Activated CD4-positive, alpha-beta T cell treated with anti-CD3 and anti-CD28 coated beads for 36 hours (primary cell): ENCODE measurements at regions of chr3 and their contacts with region 1.

Region 1: DNA sequence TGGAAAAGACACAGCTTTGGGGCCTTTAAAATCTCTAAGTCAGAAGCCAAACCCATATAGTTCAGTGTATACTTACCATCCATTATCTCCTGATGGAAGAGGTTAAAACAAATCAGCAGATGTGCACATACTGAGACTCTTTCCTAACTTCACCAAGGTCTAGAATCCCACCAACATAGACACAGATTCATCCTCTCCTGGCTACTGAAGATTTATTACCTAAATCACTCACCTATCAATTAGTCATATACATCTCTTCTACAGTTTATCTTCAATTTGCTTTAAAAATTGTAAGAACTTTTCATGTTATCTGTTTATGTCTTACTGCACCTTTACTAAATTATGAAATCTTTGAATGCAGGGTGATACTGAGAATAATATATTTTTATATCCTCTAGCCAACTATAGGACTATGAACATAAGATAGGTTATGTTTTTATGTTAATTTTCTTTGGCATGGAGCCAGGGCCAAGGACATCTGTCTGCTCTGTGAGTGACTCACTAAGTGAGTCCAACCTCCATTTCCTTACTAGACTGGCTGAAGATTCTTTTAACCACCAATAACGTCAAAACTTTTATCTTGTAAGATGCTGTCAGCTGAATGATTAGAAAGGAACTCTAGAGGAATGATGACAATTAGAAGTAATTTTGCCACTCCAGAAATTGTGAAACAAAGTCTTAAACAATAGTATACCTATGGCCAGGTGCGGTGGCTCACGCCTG is 397.6 kb downstream of the FOXP1 start:
- DNase-seq: peak; percentile 38
- ATAC-seq: peak; percentile 70
- H3K4me3 Mint-ChIP-seq: no peak overlapping the region
- H3K27ac Mint-ChIP-seq: peak overlapping the region; percentile 83
- H3K4me1 Mint-ChIP-seq: peaks cover 59% of the 10 kb centered on the region
- H3K27me3 Mint-ChIP-seq: no peaks in the 10 kb centered on the region

Region 2: GRCh38 chr3:70973558-70973957 is 212.3 kb before region 1 on chr3:
- CTCF ChIA-PET with region 1: no interaction called
- POLR2A ChIA-PET with region 1: no interaction called
- intact Hi-C with region 1: no loop called
- DNase-seq: no peak
- ATAC-seq: peak; percentile 69
- H3K4me3 Mint-ChIP-seq: no peak overlapping the region
- H3K27ac Mint-ChIP-seq: peak overlapping the region; percentile 76
- H3K4me1 Mint-ChIP-seq: peaks cover 27% of the 10 kb centered on the region
- H3K27me3 Mint-ChIP-seq: no peaks in the 10 kb centered on the region

Region 3: DNA sequence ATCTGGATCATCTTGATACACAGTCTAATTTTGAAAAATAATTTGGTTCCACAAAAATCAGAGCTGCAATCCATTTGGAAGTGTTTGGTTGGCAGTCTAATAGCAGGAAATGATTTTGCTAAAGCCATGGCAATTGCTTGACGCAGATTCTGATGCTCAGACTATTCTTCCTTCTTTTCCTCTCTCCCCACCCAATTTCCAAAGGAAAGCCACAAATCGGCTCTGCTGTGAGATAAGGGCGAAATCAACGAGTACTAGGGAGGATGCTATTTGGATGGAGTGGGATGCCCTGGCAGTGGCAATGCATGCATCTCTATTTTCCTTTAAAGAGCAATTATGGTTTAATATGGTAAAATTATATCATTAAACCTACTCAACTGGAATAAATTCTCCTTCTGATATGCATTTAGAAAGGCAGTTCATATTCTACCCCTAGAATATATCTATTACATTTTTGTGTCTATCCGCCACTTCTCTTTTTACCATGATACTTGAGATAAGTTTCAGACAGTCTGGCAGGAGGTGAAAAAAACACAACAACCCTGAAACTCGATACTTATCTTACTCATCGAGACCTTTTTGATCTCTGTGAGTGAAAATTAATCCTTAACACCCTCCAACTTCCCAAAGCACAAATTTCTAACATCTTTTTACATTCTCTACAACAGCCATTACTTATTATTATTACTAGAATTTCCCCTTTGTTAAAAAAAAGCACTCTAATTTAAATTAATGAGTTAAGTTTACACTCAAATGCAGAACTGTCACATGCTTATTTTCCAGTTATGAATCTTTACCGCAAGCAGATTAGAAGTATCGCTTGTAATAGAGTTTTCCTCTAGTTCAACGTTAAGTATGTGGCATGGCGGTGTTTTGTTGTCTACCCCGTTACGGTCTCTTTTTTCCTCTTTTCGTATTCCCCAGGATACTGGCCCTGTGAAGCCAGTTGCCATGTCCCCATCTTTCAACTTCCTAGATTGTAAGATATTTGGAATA is 35.6 kb before region 1 on chr3:
- CTCF ChIA-PET with region 1: no interaction called
- POLR2A ChIA-PET with region 1: interaction called, 3 read pairs
- intact Hi-C with region 1: loop called in 1 of 2 experiments (anchors 5 kb)
- DNase-seq: no peak
- ATAC-seq: peak; percentile 87
- H3K4me3 Mint-ChIP-seq: peak overlapping the region; percentile 34
- H3K27ac Mint-ChIP-seq: peak overlapping the region; percentile 34
- H3K4me1 Mint-ChIP-seq: peaks cover 60% of the 10 kb centered on the region
- H3K27me3 Mint-ChIP-seq: no peaks in the 10 kb centered on the region

Region 4: DNA sequence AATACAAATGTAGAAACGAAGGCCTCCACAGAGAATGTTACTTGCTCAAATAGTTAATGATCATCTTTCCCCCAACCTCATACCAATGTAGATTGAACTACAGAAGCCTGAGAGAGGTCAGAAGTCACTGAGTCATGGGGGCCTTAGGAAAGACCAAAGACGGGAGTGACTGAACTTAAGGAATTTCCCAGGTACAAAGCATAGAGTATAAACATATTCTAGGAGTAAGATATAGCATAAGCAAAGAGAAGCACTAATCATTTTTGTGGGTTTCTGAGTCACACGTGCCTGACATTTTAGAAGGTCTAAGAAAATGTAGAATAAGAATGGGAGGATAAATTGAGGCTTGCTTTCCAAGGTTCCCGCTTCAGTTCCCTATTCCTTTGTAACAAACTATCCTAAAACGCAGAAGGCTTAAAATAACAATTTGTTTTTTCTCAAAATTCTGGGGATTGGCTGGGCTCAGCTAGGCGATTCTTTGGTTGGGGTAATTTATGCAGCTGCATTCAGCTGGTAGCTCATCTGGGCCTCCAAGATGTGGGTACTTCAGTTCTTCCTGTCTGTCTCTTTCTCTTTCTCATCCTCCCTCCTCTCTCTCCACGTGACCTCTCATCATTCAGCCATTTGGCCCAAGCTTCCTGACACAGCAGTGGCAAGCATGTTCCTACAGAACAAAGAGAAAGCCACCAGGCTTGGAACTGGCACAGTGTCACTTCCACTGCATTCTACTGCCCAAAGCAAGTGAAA is 24.9 kb before region 1 on chr3:
- CTCF ChIA-PET with region 1: no interaction called
- POLR2A ChIA-PET with region 1: no interaction called
- intact Hi-C with region 1: loop called in 1 of 2 experiments (anchors 2 kb)
- DNase-seq: peak; percentile 22
- ATAC-seq: peak; percentile 64
- H3K4me3 Mint-ChIP-seq: no peak overlapping the region
- H3K27ac Mint-ChIP-seq: peak overlapping the region; percentile 77
- H3K4me1 Mint-ChIP-seq: peaks cover 71% of the 10 kb centered on the region
- H3K27me3 Mint-ChIP-seq: no peaks in the 10 kb centered on the region

Region 5: DNA sequence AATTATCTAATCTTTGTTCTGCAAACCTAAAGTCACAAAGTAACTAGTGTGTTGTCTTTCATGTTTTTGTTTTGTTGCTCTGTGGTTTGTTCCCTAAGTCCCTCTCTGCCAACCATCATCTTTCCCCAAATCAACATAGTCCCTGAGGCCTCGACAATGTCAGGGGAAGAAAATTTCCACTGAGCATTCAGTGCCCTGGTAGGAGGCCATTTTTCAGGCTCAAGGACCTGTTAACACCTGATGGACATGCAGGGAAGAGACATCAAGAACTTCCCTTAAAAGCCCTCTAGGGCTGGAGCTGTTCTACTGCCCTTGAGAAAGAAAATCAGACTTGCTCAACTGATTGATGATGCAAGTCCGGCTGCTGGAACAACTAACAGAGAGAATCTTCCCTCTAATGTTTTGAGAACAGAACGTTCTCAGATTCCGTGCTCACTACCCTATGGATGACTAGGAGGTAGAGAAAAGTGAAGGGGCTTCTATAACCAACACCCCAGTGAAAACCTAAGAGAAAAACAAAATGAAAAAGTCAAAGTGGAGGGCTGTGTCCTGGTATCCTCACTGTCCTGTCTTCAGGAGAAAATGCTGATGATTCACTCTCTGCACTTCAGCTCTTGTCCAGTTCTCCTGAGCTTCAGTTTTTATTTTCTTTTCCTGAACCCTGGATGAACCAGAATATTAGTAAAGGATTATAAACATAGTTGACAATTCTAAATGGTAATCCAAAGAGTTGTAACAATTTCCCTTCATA is 24.5 kb after region 1 on chr3:
- CTCF ChIA-PET with region 1: interaction called, 11 read pairs
- POLR2A ChIA-PET with region 1: no interaction called
- intact Hi-C with region 1: no loop called
- DNase-seq: no peak
- ATAC-seq: peak; percentile 20
- H3K4me3 Mint-ChIP-seq: peak overlapping the region; percentile 26
- H3K27ac Mint-ChIP-seq: peak overlapping the region; percentile 73
- H3K4me1 Mint-ChIP-seq: peaks cover 83% of the 10 kb centered on the region
- H3K27me3 Mint-ChIP-seq: no peaks in the 10 kb centered on the region

Region 6: DNA sequence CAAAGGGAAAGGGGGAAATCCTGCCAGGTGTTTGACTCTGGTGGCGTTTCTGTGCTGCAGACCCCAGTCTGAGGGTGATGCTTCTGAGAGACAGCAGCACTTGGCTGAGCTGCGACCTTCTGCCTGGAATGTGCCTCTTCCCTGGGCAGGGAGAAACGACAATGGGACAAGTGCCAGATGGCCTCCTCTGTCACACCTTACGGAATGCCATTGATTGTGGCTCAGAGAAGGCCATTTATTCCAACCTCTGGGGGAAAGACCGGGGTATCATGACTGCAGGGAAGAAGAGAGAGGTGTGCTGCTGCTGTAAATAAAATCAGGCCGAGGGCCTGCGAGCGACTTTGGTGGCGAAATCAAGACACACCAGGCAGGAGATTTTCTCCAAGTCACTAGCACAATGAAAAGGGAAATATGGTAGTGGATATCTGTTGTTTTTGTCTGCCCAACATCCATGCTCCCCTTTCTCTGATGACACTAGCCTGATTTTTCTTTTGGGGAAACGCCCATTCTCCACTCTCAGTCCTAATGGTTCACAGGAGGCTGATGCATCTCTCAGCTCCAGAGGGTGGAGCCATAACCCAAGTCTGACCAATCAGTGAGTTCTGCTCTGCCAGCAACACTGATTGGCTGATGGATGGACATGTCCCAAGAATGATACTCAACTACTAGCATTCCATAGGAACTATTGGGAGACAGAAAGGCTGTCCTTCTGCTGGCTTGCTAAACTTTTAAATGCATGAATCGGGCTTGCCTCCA is 61.5 kb after region 1 on chr3:
- CTCF ChIA-PET with region 1: no interaction called
- POLR2A ChIA-PET with region 1: no interaction called
- intact Hi-C with region 1: no loop called
- DNase-seq: no peak
- ATAC-seq: peak; percentile 67
- H3K4me3 Mint-ChIP-seq: no peak overlapping the region
- H3K27ac Mint-ChIP-seq: no peak overlapping the region
- H3K4me1 Mint-ChIP-seq: peaks cover 74% of the 10 kb centered on the region
- H3K27me3 Mint-ChIP-seq: no peaks in the 10 kb centered on the region